Activated T-helper 2 cell treated with anti-CD3 and anti-CD28 coated beads, Interferon-gamma antibody, Interleukin-2, Interleukin-4, amounts not matched to agents 10 μg/mL and 5 μg/mL and 100 μg/mL, durations not matched to agents 14 hours and 24 hours and 36 hours (primary cell): ENCODE measurements at regions of chr7 and their contacts with region 1.

Region 1: DNA sequence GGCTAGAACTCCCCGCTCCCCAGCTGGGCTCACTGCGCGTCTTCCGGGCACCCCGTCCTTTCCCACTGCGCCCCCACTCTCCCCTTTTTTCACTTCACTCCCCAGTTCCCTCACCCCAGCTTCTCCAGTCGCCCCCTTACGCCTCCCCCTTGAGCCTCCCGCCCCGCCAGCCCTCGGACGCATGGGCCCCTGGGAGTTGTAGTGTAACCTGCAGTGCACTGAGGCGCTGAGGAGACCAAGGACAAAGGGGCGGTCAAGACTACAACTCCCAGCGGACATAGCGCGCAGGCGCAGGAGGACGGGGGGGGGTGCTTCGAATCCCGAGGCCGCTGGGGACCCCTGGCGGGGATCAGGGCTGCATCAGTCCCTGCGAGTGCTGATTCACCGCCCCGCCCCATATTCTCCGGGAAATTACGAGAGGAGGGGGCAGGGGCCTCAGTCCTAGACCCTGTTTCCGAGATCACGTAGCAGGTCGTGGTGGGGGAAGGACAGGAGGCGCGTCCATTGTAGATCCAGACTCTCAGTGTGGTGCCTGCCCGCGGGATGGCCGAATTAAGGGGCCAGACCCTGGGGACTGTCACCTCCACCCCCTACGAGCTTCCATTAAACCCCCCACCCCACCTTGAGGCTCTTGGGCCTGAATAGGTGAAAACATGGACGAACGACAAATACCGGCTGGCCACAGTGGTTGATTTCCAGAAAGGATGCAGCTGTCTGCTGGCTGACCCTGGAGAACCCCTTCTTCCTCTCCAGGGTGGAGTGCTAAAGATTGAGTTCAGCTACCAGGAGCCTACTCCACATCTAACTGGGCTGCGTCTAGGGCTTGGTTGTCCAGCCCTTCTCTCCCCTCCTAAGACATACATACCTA is 554 bp upstream of the YWHAG start:
- DNase-seq: peak; percentile 92
- H3K4me3 Mint-ChIP-seq: peak overlapping the region; percentile 87
- H3K27ac Mint-ChIP-seq: peak overlapping the region; percentile 92
- H3K4me1 Mint-ChIP-seq: peaks cover 39% of the 10 kb centered on the region
- H3K27me3 Mint-ChIP-seq: no peaks in the 10 kb centered on the region

Region 2: DNA sequence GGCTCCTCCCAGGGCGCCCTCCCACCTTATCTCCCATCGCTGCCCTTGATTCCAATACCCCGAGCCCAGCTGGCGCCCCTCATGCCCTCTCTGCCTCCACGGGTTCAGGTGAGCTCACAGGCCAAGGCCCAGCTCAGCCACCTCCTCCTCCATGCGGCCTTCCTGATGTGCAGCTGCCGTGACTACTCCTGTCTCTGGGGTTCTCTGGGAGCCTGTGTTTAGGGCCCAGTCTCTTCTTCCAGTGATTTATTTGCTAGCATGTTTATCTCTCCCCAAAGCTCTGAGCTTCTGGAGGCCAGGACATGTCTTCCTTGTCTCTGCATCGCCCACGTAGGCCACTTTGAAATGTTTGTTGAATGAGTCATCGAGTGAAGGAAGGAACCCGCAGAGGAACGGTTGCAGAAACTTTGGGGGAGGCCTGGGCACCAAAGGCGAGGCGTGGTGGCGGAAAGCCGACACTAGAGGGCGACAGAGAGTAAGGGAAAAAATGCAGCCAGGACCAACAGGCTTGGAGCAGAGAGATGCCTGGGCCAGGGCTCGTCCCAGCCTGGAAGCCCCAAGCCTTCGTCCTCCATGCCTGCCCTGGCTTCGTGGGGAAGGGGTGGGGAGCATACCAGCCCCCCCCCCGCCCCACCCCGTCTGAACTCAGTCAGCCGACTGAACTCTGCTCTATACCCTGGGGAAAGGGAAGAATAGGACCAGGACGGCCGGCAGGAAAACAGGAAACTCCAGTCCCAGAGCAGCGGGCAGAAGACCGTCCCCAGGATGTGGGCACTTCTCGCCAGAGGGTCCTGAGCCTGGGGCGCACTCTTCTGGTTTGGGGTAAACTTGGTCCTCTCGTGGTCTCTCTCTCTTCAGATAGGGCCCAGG is 67.8 kb before region 1 on chr7:
- intact Hi-C with region 1: loop called (anchors 2 kb)
- DNase-seq: peak; percentile 84
- H3K4me3 Mint-ChIP-seq: peak overlapping the region; percentile 3
- H3K27ac Mint-ChIP-seq: peak overlapping the region; percentile 78
- H3K4me1 Mint-ChIP-seq: peaks cover 13% of the 10 kb centered on the region
- H3K27me3 Mint-ChIP-seq: no peaks in the 10 kb centered on the region

Region 3: GRCh38 chr7:76343294-76343930 is 15.9 kb before region 1 on chr7:
- intact Hi-C with region 1: loop called (anchors 2 kb)
- DNase-seq: no peak
- H3K4me3 Mint-ChIP-seq: no peak overlapping the region
- H3K27ac Mint-ChIP-seq: peak overlapping the region; percentile 10
- H3K4me1 Mint-ChIP-seq: peaks cover 56% of the 10 kb centered on the region
- H3K27me3 Mint-ChIP-seq: no peaks in the 10 kb centered on the region

Region 4: DNA sequence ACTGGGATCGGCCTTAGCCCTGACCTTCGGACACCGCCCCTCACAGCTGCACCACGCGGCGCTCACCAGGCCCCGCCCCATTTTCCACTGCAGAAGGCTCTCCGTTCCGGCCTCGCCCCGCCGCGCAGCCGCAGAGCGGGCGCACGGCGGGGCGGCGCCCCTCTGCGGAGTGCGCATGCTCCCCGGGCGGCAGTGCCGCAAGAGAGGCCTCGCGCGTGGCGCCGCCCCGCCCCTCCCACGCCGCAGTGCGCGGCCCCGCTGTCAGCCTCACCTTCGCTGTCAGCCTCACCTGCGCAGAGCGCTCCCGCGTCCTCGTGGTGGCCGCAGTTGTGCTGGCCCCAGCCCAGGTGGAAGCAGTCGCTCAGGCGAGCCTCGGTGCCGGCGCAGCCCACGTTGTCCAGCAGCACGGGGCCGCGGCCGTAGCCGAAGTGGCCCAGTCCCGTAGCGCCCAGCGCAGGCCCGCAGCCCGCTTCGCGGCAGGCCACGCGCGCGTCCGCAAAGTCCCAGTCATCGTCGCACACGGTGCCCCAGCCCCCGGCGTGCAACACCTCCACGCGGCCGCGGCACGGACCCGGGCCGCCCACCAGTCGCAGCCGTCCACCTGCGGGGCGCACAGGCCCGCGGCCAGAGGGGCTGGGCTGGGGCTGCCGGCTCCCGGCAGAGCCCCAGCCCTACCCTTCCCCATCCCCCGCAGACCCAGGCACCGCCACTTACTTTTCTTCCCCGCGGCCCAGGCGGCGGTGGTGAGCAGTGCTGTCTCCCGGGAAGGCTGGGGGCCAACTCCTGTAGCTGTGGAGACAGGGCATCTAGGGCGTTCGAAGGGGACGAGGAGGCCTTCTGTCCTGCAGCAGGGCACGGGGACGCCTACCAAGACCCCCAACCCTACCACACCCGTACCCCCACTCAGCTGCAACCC is 34.0 kb after region 1 on chr7:
- intact Hi-C with region 1: loop called (anchors 1 kb)
- DNase-seq: peak; percentile 89
- H3K4me3 Mint-ChIP-seq: peak overlapping the region; percentile 80
- H3K27ac Mint-ChIP-seq: peak overlapping the region; percentile 97
- H3K4me1 Mint-ChIP-seq: peaks cover 14% of the 10 kb centered on the region
- H3K27me3 Mint-ChIP-seq: no peaks in the 10 kb centered on the region